ENCODE measurements at regions of chr11 and their contacts with region 1.

Region 1: GRCh38 chr11:72642884-72643511 is 31.2 kb downstream of the PDE2A start:
- DNase-seq: peak in 1 of 2 donors; percentile 35
- ATAC-seq: peak; percentile 62 to 78
- H3K4me3 ChIP-seq: peak overlapping the region; percentile 63 to 77 (median 68)
- H3K27ac ChIP-seq: peak overlapping the region; percentile 24 to 67 (median 52)
- H3K4me1 ChIP-seq: peaks cover 8 to 21% of the 10 kb centered on the region in 2 donors
- H3K27me3 ChIP-seq: peaks cover 0 to 11% (median 0%) of the 10 kb centered on the region in 3 donors
- CTCF ChIP-seq: peak; percentile 94 to 99 (median 98)
- POLR2A ChIP-seq: no peak

Region 2: GRCh38 chr11:72598906-72599305 is 44.1 kb before region 1 on chr11:
- in situ Hi-C with region 1: no loop called
- intact Hi-C with region 1: loop called (anchors 1 kb)
- DNase-seq: no peak
- ATAC-seq: peak; percentile 55 to 60
- H3K4me3 ChIP-seq: no peak overlapping the region
- H3K27ac ChIP-seq: no peak overlapping the region
- H3K4me1 ChIP-seq: no peaks in the 10 kb centered on the region
- H3K27me3 ChIP-seq: no peaks in the 10 kb centered on the region
- CTCF ChIP-seq: peak in 4 of 5 experiments; percentile 61 to 71 (median 64)
- POLR2A ChIP-seq: no peak

Measured in gastrocnemius medialis (tissue), 4 donors.